Heart right ventricle (tissue), 16 donors: ENCODE measurements at regions of chr3 and their contacts with region 1.

Region 1: DNA sequence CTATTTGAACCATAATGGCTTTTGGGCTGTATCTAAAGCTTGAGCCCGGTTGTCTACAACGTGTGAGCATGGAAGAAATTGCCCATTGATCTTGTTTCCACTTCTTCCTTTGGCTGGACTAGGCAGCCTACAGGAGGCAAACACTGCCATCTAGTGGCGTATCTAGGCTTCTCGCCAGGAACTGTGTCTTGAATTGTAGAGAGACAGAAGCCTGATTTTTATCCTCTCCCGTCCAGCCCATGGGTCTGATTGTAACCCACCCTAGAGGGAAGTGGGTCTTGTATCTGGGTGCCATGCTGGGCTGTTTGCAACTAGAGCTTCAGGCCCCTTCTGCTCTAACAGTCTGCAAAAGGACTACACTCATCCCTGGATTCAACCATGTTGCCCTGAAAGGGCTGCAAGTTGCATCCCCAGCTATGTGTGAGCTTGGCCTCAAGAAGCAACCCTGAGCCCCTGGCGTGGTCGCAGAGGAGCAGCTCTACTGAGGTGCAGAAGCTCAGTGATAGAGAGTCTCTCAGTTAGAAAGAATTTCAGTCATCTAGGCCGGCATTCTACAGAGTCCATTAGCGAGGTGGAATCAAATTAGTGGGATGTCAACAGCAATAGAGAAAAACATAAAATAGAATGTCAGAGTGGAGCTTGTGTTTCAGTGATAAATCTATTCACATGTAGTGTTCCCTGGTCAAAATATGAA is 170.2 kb upstream of the UMPS start:
- DNase-seq: peak in 1 of 2 donors; percentile 71
- ATAC-seq: peak; percentile 53 to 87 (median 73)
- H3K4me3 ChIP-seq: no peak overlapping the region
- H3K27ac ChIP-seq: peak overlapping the region in 4 of 10 donors; percentile 45 to 52 (median 49)
- H3K4me1 ChIP-seq: peaks cover 0 to 38% (median 25%) of the 10 kb centered on the region in 9 donors
- H3K27me3 ChIP-seq: peaks cover 0 to 5% (median 0%) of the 10 kb centered on the region in 7 donors
- CTCF ChIP-seq: peak; percentile 78 to 92 (median 86)

Region 2: GRCh38 chr3:124014366-124014942 is 545.6 kb before region 1 on chr3:
- intact Hi-C with region 1: loop called in 2 of 10 experiments (anchors 10 kb)
- DNase-seq: no peak
- ATAC-seq: peak in 1 of 8 donors; percentile 37
- H3K4me3 ChIP-seq: no peak overlapping the region
- H3K27ac ChIP-seq: no peak overlapping the region
- H3K4me1 ChIP-seq: peaks cover 0 to 14% (median 0%) of the 10 kb centered on the region in 9 donors
- H3K27me3 ChIP-seq: no peaks in the 10 kb centered on the region
- CTCF ChIP-seq: no peak

Region 3: DNA sequence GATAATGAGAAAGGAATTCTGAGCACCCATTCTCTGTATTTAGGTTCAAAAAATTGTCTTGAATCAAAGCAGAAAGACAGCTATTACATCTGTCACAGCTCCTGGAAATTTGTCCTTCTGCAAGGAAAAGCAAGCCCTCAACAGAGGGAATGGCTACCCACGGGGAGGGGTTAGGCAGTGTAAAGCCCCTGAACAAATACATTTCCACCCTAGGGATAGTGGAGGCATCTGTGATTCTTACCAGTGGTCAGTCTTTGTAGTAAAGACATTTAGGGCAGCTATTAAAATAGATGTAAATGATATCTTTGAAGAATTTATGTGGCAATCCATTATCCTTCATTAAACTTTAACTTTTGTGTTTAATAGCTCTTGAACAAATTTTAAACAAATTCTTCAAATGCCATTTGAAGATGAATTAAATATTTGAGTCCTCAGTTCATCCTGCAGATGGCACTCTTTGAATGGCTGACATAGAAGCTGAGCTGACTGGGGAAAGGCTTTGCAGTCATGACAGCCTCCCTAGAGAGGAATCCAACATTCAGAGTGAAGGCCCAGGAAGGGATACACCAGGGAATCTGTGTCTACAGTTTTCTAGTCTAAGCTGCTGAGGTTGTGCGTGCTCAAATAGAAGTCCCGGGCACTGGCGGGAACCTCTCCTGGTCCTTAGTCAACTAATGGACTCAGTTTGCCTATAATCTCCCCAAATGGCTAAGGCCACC is 208.4 kb before region 1 on chr3:
- intact Hi-C with region 1: loop called in 6 of 10 experiments (anchors 2 to 10 kb)
- DNase-seq: peak in 1 of 2 donors; percentile 52
- ATAC-seq: peak in 7 of 8 donors; percentile 63 to 88 (median 80)
- H3K4me3 ChIP-seq: no peak overlapping the region
- H3K27ac ChIP-seq: no peak overlapping the region
- H3K4me1 ChIP-seq: no peaks in the 10 kb centered on the region
- H3K27me3 ChIP-seq: no peaks in the 10 kb centered on the region
- CTCF ChIP-seq: peak; percentile 39 to 74 (median 60)

Region 4: DNA sequence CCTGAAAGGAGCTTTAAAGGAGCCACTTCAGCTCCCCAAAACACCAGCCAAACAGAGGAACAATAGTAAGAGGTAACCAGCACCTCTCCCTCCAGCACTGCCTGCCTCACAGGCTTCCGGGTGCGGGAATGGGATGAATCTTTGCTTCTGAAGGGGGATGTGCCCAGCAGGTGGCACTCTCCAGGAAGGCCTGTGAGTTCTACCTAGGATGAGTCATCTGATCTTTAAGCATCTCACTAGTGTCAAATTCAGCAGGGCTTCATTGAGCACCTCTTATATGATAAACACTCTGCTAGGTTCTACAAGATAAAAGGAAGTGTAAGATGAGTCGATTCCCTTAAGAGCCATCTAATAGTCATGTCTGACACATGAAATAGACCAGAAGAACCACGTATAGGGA is 67.2 kb before region 1 on chr3:
- intact Hi-C with region 1: loop called in 1 of 10 experiments (anchors 10 kb)
- DNase-seq: peak in 1 of 2 donors; percentile 23
- ATAC-seq: peak in 7 of 8 donors; percentile 35 to 74 (median 61)
- H3K4me3 ChIP-seq: no peak overlapping the region
- H3K27ac ChIP-seq: no peak overlapping the region
- H3K4me1 ChIP-seq: peaks cover 0 to 8% (median 0%) of the 10 kb centered on the region in 9 donors
- H3K27me3 ChIP-seq: no peaks in the 10 kb centered on the region
- CTCF ChIP-seq: peak in 8 of 9 donors; percentile 12 to 58 (median 46)

Region 5: DNA sequence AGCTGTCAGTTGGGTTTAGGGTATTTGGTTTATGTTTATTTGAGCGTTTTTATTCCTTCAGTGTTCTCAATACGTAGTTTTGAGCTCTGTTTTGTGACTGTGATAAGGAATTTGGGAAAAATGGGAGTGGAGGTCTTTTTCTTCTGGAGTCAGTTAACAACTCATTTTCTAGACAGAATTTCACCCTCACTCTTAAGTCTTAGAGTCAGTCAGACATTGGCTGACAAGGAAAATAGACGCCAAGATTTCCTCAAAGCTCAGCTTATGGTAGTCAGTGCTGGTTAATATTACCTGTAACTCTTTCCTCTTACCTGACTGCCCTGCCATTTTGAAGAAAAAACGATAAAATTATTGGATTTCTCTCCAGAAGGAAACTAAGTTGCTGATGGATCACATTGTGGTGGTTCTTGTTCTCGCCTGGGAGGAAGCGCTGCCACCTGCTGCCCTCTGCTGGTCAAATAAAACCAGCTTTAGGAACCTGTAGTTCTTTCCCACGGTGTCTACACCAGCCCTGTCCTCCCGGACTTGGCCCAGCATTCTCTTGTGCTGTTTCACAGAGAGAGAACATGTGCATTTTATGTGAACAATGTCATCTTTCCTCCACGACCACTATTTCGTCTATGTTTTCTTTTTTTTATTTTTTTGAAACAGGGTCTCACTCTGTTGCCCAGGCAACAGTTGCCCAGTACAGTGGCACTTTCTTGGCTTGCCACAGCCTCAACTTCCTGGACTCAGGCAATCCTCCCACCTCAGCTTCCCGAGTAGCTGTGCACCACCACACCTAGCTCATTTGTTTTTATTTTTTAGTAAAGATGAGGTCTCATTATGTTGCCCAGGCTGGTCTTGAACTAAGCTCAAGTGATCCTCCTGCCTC is 128.8 kb after region 1 on chr3:
- intact Hi-C with region 1: loop called (anchors 1 to 5 kb)
- DNase-seq: peak; percentile 68 to 83
- ATAC-seq: peak; percentile 64 to 85 (median 82)
- H3K4me3 ChIP-seq: no peak overlapping the region
- H3K27ac ChIP-seq: no peak overlapping the region
- H3K4me1 ChIP-seq: peaks cover 2 to 34% (median 12%) of the 10 kb centered on the region in 9 donors
- H3K27me3 ChIP-seq: no peaks in the 10 kb centered on the region
- CTCF ChIP-seq: peak; percentile 79 to 95 (median 88)

Region 6: DNA sequence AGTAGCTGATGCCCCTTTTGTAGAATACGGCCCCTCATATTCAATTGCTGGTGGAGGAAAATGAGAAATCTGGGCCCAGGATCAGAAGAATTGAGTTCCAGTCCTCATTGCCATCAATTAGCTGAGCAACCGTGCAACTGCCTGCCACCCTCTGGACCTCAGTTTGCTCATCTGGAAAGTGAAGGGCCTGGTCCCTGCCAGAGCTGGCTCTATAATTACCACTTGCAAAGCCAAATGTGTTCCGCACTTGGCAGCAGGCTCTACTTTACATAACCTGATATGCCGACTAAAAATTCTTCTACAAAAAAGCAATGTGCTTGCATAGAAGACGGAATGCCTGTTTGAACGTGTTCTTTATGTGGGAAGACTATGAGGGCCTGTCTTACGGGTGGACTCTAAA is 335.7 kb after region 1 on chr3:
- intact Hi-C with region 1: loop called in 5 of 10 experiments (anchors 10 kb)
- DNase-seq: no peak
- ATAC-seq: peak in 4 of 8 donors; percentile 40 to 69 (median 45)
- H3K4me3 ChIP-seq: no peak overlapping the region
- H3K27ac ChIP-seq: no peak overlapping the region
- H3K4me1 ChIP-seq: peaks cover 0 to 21% (median 7%) of the 10 kb centered on the region in 9 donors
- H3K27me3 ChIP-seq: no peaks in the 10 kb centered on the region
- CTCF ChIP-seq: no peak

Region 7: GRCh38 chr3:124905849-124906248 is 345.8 kb after region 1 on chr3:
- intact Hi-C with region 1: loop called in 4 of 10 experiments (anchors 5 to 10 kb)
- DNase-seq: no peak
- ATAC-seq: no peak
- H3K4me3 ChIP-seq: no peak overlapping the region
- H3K27ac ChIP-seq: no peak overlapping the region
- H3K4me1 ChIP-seq: peaks cover 0 to 8% (median 4%) of the 10 kb centered on the region in 9 donors
- H3K27me3 ChIP-seq: no peaks in the 10 kb centered on the region
- CTCF ChIP-seq: no peak